Sigmoid colon (tissue), 7 donors: ENCODE measurements at regions of chr17 and their contacts with region 1.

Region 1: DNA sequence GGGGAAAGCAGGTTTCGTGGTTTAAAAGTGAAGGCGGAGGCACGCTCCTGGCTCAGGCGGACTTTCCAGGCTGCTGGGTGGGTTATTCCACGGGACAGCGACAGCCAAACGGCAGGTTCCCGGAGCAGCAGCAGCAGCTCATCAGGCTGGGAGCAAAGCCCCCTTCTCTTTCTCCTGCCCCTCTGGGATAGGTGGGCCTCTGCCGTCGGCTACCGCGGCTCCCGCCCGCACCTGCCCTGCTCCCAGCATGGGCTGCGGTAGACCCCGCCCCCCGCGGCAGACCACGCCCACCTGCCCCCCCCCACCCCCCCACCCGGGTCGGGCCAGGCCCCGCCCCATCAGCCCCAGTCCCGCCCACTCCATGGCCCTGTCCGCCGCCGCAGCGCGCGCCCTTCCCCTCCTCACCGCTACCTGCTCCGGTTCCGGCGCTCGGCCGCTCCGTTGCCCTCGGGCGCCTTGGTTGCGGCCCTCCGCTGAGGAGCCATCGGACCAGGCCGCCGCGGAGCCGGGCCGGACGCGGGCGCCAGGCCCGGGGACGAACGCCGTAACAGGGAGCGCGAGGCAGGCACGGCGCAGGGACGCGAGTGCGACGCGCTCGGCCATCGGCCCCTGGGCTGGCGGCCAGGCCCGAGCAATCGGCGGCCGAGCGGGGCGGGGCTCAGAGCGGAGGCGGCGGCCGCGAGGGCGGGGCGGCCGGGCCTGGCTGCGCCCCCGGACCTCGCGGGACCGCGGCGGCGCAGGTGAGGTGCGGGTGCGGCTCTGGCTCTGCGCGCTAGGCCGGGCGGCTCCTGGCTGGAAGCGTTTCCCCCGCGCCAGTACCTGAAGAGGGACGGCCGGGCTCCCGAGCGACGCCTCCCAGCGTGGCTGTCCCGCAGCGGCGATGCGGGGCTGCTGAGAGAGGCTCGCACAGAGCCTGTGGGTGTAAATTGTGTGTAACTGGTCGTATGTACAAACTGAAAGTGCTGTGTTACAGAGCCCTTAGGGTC is at the starts of genes HEXD and OGFOD3:
- DNase-seq: peak; percentile 86
- H3K4me3 ChIP-seq: peak within 1 kb of the TSS; percentile 55 to 77 (median 74)
- H3K27ac ChIP-seq: peak within 1 kb of the TSS; percentile 86 to 94 (median 89)
- H3K4me1 ChIP-seq: peaks cover 0 to 26% (median 12%) of the 10 kb centered on the region in 4 donors
- H3K27me3 ChIP-seq: no peaks in the 10 kb centered on the region
- CTCF ChIP-seq: no peak
- EP300 ChIP-seq: no peak
- POLR2A ChIP-seq: no peak
- total RNA-seq, gene HEXD: 15.8 to 42.9 (median 24.0) TPM
- total RNA-seq, gene OGFOD3: 14.1 to 28.2 (median 22.1) TPM

Region 2: DNA sequence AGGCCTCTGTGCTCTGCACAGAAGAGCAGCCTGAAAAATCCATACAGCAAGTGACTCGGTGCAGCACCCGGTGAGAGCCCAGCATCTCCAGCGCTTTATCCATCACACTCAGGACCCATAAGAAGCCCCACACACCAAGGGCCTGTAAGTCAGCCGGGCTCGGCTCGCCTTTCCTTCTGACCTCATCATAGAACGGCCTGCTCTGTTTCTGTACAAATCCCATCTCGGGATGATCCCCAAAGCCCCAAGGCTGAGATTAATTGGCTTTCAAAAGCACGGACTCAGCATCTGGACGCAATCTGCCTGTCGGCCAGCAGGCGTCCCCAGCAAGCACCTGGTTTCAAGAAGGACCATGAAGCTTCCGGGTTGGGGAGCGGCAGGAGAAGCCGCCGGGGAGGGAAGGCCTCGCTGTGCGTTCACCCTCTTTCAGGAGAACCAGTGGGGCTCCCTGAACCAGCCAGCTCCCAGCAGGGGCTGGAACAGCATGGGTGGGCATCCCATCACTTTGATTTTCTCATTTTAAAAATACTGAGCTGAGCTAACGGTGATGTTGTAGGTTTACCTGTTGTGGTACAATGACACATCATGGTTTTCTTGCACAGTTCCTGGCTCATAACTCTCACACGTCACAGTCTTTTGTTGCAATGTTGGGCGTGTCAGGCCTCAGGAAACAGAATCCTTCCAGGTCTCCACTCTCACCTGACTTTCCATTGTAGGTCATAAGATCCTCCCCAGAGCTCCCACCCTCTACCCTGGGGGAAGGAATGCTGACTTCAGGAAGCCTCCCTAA is 212.4 kb before region 1 on chr17:
- intact Hi-C with region 1: loop called (anchors 10 kb)
- DNase-seq: peak; percentile 93
- H3K4me3 ChIP-seq: peak overlapping the region in 1 of 4 donors; percentile 24
- H3K27ac ChIP-seq: peak overlapping the region; percentile 56 to 68 (median 64)
- H3K4me1 ChIP-seq: peaks cover 0 to 12% (median 10%) of the 10 kb centered on the region in 4 donors
- H3K27me3 ChIP-seq: no peaks in the 10 kb centered on the region
- CTCF ChIP-seq: peak; percentile 89 to 95 (median 93)
- EP300 ChIP-seq: no peak
- POLR2A ChIP-seq: peak; percentile 22 to 26

Region 3: GRCh38 chr17:82450170-82451106 is 32.1 kb after region 1 on chr17 and contains the start of gene CYBC1:
- intact Hi-C with region 1: loop called (anchors 2 kb)
- DNase-seq: peak; percentile 97
- H3K4me3 ChIP-seq: peak within 1 kb of the TSS; percentile 83 to 87 (median 84)
- H3K27ac ChIP-seq: peak within 1 kb of the TSS; percentile 88 to 92 (median 90)
- H3K4me1 ChIP-seq: peaks cover 0 to 26% (median 22%) of the 10 kb centered on the region in 4 donors
- H3K27me3 ChIP-seq: no peaks in the 10 kb centered on the region
- CTCF ChIP-seq: no peak
- EP300 ChIP-seq: peak in 2 of 4 donors; percentile 53 to 80
- POLR2A ChIP-seq: peak; percentile 90 to 93
- total RNA-seq, gene CYBC1: 22.8 to 76.6 (median 46.7) TPM